WTC11 (cell line): ENCODE measurements at regions of chr19 and their contacts with region 1.

Region 1: DNA sequence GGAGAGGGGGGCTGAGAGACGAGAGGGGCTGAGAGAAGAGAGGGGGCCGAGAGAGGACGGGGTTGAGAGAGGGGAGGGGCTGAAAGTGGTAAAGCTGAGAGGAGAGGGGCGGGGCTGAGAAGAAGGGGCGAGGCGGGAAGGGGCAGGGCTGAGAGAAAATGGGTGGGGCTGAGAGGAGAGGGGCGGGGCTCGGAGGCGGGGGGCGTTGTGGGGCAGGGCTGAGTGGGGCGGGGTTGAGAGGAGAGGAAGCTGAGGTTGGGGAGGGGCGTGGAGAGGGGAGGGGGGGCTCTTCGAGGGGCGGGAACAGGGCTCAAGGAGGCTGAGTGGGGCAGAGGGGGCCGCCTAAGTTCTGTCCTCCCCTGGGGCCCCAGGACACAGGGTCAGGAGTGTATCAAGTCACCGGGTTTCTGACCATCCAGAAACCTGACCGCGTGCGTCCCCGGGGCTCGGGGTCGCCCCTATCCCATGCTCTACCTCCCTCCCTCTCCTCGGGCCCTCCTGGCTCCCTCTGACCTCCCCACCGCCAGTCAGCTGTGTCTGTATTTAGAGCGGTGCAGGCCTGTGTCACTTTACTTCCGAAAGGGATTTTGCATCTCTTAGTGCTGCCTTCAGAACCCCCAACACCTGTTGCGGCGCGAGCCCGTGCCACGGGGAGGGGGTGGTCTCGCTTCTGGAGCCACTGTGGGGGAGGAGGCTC is 38.6 kb upstream of the SEMA6B start:
- DNase-seq: peak; percentile 88
- ATAC-seq: peak; percentile 74
- H3K4me3 Mint-ChIP-seq: peak overlapping the region; percentile 80
- H3K27ac Mint-ChIP-seq: no peak overlapping the region
- H3K4me1 Mint-ChIP-seq: peaks cover 10% of the 10 kb centered on the region
- H3K27me3 Mint-ChIP-seq: peaks cover 67% of the 10 kb centered on the region
- CTCF ChIP-seq: no peak

Region 2: DNA sequence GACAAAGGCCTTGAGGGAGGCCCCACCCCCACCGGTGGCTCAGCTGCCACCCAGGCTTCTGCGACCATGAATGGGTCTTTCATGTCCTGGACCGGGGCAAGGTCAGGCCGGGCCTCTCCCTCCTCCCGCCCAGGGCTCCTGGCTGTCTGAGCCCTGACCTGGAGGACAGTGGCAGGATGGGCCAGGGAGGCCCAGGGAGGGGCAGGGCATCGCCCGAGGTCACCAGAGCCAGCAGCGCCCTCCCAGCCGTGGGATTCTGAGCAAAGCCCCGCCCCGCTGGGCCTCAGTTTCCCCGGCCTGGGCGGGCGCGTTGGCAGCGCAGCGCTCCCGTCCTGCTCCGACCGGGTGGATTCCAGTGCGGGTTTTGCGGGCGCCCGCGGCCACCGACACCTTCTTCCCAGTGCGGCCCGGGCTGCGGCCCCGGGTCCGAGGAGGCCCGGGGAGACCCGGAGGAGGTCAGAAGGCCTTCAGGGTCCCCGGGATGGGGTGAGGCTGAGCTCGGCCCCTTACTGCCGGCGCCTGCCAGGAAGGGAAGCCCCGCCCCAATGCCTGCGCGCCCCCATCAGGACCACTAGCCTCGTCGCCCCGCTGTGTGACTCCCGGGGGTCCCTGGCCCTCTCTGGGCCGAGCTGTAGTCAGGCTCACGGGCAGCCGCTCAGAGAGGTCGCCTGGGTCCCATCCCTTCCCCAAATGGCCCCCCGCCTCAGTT is 14.0 kb before region 1 on chr19:
- CTCF ChIA-PET with region 1: interaction called, 32 read pairs
- POLR2A ChIA-PET with region 1: interaction called, 3 read pairs
- DNase-seq: peak; percentile 72
- ATAC-seq: peak; percentile 43
- H3K4me3 Mint-ChIP-seq: peak overlapping the region; percentile 68
- H3K27ac Mint-ChIP-seq: no peak overlapping the region
- H3K4me1 Mint-ChIP-seq: peaks cover 21% of the 10 kb centered on the region
- H3K27me3 Mint-ChIP-seq: peaks cover 54% of the 10 kb centered on the region
- CTCF ChIP-seq: no peak

Region 3: GRCh38 chr19:4660181-4660791 is 62.2 kb after region 1 on chr19:
- CTCF ChIA-PET with region 1: no interaction called
- POLR2A ChIA-PET with region 1: no interaction called
- DNase-seq: peak; percentile 72
- ATAC-seq: peak; percentile 95
- H3K4me3 Mint-ChIP-seq: no peak overlapping the region
- H3K27ac Mint-ChIP-seq: no peak overlapping the region
- H3K4me1 Mint-ChIP-seq: no peaks in the 10 kb centered on the region
- H3K27me3 Mint-ChIP-seq: no peaks in the 10 kb centered on the region
- CTCF ChIP-seq: no peak